ENCODE measurements at regions of chr6 and their contacts with region 1.

Region 1: GRCh38 chr6:126204598-126204997 is 135.3 kb upstream of the CENPW start:
- DNase-seq: no peak
- H3K4me3 ChIP-seq: no peak overlapping the region
- H3K27ac ChIP-seq: no peak overlapping the region
- H3K4me1 ChIP-seq: no peaks in the 10 kb centered on the region
- H3K27me3 ChIP-seq: no peaks in the 10 kb centered on the region
- CTCF ChIP-seq: no peak
- POLR2A ChIP-seq: no peak

Region 2: DNA sequence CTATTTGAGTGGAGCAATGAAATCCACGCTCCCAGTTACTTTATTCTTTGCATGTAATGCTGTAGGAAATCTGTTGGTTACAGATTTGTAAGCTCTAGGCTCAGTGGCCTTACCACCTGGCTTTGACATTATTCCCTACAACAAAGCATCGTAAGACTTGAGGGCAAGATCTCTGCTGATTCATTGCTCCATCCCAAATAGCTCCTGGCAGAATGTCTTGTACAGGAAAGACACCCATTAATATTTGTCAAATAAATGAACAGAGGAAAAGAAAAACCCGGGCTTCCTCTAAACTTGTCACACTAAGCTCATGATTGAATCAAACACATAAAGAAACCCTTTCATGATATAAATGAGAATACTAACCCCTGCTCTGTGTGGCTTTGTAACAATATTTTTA is 1599.9 kb before region 1 on chr6:
- intact Hi-C with region 1: loop called (anchors 10 kb)
- DNase-seq: no peak
- H3K4me3 ChIP-seq: no peak overlapping the region
- H3K27ac ChIP-seq: no peak overlapping the region
- H3K4me1 ChIP-seq: no peaks in the 10 kb centered on the region
- H3K27me3 ChIP-seq: no peaks in the 10 kb centered on the region
- CTCF ChIP-seq: no peak
- POLR2A ChIP-seq: no peak

Region 3: DNA sequence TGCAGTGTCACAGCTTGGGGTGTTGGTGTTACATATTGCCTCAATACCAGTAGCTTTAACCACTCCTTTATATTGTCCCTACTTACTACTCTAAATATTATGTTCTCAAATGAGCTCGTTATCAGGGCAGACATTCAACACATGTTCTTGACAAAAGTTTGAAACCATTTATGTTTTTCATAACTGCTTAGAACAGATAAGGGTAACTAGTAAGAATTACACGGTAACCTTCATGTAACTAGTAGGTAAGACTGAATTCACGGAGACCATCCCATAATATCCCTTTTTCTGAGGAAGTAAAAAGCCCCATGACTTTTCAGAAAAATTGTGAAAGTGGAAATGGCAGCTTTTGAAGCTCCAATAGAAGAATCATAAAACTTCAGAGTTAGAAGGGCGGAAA is 75.7 kb after region 1 on chr6:
- intact Hi-C with region 1: no loop called
- DNase-seq: no peak
- H3K4me3 ChIP-seq: no peak overlapping the region
- H3K27ac ChIP-seq: no peak overlapping the region
- H3K4me1 ChIP-seq: no peaks in the 10 kb centered on the region
- H3K27me3 ChIP-seq: no peaks in the 10 kb centered on the region
- CTCF ChIP-seq: no peak
- POLR2A ChIP-seq: no peak

Region 4: GRCh38 chr6:126396131-126396530 is 191.5 kb after region 1 on chr6:
- intact Hi-C with region 1: no loop called
- DNase-seq: no peak
- H3K4me3 ChIP-seq: no peak overlapping the region
- H3K27ac ChIP-seq: no peak overlapping the region
- H3K4me1 ChIP-seq: no peaks in the 10 kb centered on the region
- H3K27me3 ChIP-seq: no peaks in the 10 kb centered on the region
- CTCF ChIP-seq: no peak
- POLR2A ChIP-seq: no peak

Measured in breast epithelium (tissue), 4 donors.